Left cardiac atrium (tissue), 4 donors: ENCODE measurements at regions of chr2 and their contacts with region 1.

Region 1: DNA sequence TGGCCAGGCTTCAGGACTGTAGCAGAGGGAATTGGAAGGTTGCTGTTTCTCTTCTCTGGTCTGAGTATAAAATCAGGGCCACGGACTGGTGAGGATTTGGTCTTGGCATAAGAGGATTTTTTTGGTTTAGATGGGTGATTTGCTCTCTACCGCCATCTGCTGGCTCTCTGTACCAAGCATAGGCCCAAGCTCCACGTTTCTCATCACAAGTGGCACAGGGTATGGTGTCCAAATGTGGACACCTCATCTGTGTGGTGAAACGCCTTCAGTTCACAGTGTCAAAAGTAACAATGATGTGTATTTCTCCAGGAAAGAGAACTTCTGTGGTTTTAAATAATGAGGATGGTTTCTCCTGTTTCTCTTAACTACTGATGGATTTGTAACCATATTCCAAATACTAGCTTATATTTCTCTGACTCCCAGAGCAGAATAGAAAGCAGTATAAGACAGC is 115.1 kb downstream of the EML6 start:
- DNase-seq: peak; percentile 73
- ATAC-seq: peak; percentile 88 to 91

Region 2: GRCh38 chr2:54665436-54665856 is 173.2 kb before region 1 on chr2:
- intact Hi-C with region 1: loop called in 1 of 2 experiments (anchors 5 kb)
- DNase-seq: no peak
- ATAC-seq: peak; percentile 28 to 34

Region 3: DNA sequence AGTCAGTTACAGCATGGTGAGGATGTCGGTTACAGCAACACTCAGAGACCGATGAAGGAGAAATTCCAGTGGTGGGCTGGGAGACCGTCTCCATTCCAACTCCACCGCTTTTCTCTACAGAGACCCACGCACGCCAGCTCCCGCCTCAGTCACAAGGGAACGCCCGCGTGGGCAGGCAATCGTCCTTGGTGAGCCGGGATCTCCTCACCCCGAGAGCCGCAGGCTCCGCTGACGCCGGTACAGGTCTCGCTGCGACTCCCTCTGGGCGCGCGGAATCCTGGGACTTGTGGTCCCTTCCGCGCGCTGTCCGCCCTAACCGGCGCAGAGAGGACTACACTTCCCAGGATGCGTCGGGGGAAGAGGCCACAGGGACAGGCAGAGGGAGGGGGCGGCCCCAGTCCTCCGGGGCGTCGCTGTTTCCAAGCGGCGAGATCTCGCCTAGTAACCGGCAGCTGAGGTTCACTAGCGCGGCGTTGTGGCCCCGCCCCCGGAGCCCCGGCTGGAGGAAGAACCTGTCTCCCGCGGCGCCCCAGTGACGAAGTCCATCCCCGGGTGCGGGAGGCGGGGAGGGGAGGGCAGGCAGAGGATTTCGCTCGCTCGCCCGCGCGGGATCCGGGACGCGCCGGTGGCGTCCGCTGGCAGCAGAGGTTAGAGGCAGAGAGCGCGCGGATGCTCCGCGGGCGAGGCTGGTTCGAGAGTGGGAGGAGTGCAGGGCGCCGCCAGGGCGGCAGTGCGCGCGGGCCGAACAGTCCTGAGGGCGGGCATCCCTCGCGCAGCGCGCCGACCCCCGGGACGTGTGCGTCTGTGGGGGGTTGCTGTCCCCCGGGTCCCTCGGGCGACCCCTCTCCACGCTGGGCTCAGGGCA is 115.2 kb before region 1 on chr2 and contains the start of gene EML6:
- intact Hi-C with region 1: loop called in 1 of 2 experiments (anchors 10 kb)
- DNase-seq: peak; percentile 99
- ATAC-seq: peak; percentile 99 to 100
- total RNA-seq, gene EML6: 0.52 to 0.62 TPM

Region 4: DNA sequence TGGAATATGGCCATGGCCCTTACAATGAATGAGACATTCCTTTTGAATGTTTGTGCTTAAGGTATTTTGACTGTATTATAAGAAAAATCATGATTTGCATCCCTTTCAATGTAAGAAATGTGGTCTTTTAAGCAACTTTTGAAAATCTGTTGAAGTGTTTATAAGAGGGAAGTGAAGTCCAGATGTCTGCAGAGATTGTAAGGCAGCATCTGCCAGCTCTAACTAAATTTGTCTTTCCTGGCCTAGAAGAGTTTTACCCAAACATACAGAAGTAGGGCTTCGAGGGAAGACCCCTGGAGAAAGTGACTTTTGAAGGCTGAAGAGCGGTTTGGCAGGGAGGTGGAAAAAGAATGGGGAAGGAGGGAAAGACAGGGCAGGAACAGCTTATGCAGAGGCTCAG is 103.0 kb before region 1 on chr2:
- intact Hi-C with region 1: loop called in 1 of 2 experiments (anchors 10 kb)
- DNase-seq: no peak
- ATAC-seq: no peak